ENCODE measurements at regions of chr17 and their contacts with region 1.

Region 1: DNA sequence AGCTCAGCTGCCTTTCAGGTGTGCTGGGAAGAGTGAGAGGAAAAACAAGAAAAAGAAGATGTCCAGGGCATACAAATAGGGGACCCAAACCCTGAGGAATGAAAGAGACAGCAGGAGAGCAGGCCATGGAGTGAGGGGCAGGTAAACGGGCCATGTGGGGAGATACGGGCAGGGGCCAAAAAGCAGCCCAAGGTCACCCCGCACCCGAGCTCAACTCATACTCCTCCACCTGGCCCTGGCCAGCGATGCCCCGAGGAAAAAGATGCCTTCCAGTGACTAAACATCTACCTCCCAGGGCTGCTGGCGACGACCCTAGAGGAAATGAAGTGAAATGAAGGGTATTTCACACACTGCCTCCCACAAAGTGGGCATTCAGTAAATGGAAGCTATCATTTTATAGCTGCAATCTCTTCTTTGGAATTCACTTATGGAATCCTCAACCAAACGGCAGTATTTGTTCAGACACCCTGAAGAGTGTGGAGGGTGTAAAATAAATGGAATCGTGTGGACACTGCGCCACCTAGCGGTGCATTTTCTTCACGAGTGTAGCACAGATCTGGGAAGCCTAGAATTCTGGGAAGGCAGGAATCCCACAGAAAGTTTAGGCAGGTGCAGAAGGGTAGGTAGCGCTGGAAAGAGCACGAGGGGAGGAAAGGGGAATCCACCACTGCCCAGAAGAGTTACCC is 14.9 kb downstream of the ELAC2 start:
- DNase-seq: peak; percentile 68
- H3K4me3 ChIP-seq: no peak overlapping the region
- H3K27ac ChIP-seq: no peak overlapping the region
- H3K4me1 ChIP-seq: peaks cover 7% of the 10 kb centered on the region
- H3K27me3 ChIP-seq: no peaks in the 10 kb centered on the region
- CTCF ChIP-seq: peak; percentile 79 to 90 (median 81)
- POLR2A ChIP-seq: no peak

Region 2: GRCh38 chr17:12180644-12181261 is 822.2 kb before region 1 on chr17:
- intact Hi-C with region 1: loop called (anchors 5 kb)
- DNase-seq: peak; percentile 30
- H3K4me3 ChIP-seq: no peak overlapping the region
- H3K27ac ChIP-seq: no peak overlapping the region
- H3K4me1 ChIP-seq: no peaks in the 10 kb centered on the region
- H3K27me3 ChIP-seq: no peaks in the 10 kb centered on the region
- CTCF ChIP-seq: peak; percentile 31 to 72 (median 68)
- POLR2A ChIP-seq: no peak

Region 3: DNA sequence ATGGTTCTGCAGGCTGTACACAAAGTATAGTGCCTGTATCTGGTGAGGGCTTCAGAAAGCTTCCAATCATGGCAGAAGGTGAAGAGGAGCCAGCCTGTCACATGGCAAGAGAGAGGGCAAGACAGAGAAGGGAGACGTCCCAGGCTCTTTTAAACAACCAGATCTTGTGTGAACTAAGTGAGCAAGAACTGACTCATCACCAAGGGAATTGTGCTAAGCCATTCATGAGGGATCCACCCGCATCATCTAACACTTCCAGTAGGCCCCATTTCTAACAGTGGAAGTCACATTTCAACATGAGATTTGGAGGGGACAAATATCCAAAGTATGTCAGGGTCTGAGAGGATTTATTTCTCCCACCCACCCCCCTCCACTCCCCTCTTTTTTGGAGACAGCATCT is 71.1 kb after region 1 on chr17:
- intact Hi-C with region 1: no loop called
- DNase-seq: no peak
- H3K4me3 ChIP-seq: no peak overlapping the region
- H3K27ac ChIP-seq: no peak overlapping the region
- H3K4me1 ChIP-seq: no peaks in the 10 kb centered on the region
- H3K27me3 ChIP-seq: no peaks in the 10 kb centered on the region
- CTCF ChIP-seq: no peak
- POLR2A ChIP-seq: no peak